ENCODE measurements at regions of chr19 and their contacts with region 1.

Region 1: DNA sequence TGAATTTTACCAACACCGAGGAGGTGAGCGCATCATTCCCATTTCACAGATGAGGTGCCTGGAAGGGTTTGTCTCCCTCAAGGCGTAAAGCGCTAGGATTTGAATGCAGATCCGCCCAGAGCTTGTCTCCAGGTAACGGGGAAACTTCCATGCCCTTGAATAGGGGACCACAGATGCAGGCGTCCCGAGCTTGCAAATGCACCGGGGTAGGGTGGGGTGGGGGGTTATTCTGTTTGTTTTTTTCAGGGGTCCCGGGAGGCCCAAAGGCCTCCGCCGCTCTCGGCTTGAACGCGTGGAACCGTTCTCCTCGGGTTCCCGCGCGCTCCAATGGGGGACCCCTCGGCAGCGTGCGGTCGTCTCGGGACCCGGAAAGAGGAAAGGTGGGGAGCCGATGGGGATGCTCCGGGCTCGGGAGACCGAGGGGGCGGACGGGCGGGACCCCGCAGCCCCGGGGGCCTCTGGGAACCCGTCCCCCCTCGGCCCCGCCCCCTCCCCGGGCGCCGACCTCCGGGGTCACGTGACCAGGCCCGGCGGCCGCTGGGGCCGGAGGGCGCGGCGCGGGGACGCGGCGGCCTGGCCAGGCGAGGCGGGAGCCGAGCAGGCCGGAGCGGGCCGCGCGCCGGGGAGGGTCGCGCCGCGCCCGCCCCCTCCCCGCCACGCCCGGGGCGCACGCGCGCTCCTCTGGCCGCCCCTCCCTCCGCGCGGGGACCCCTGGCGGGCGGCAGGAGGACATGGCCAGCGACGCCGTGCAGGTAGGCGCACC is at the start of gene PKN1:
- DNase-seq: peak; percentile 64
- ATAC-seq: peak; percentile 22
- H3K4me3 Mint-ChIP-seq: peak within 1 kb of the TSS; percentile 74
- H3K27ac Mint-ChIP-seq: peak within 1 kb of the TSS; percentile 77
- H3K4me1 Mint-ChIP-seq: peaks cover 26% of the 10 kb centered on the region
- H3K27me3 Mint-ChIP-seq: peaks cover 2% of the 10 kb centered on the region
- CTCF ChIP-seq: no peak
- total RNA-seq, gene PKN1: 172 to 192 TPM

Region 2: GRCh38 chr19:14395710-14396336 is 37.1 kb before region 1 on chr19:
- CTCF ChIA-PET with region 1: no interaction called
- POLR2A ChIA-PET with region 1: no interaction called
- intact Hi-C with region 1: no loop called
- DNase-seq: no peak
- ATAC-seq: peak; percentile 17
- H3K4me3 Mint-ChIP-seq: no peak overlapping the region
- H3K27ac Mint-ChIP-seq: peak overlapping the region; percentile 52
- H3K4me1 Mint-ChIP-seq: peaks cover 13% of the 10 kb centered on the region
- H3K27me3 Mint-ChIP-seq: no peaks in the 10 kb centered on the region
- CTCF ChIP-seq: no peak

Region 3: GRCh38 chr19:14419106-14419813 is 13.7 kb before region 1 on chr19 and contains the start of gene DDX39A:
- CTCF ChIA-PET with region 1: interaction called, 19 read pairs
- POLR2A ChIA-PET with region 1: interaction called, 13 read pairs
- intact Hi-C with region 1: no loop called
- DNase-seq: peak; percentile 99
- ATAC-seq: peak; percentile 93
- H3K4me3 Mint-ChIP-seq: peak within 1 kb of the TSS; percentile 93
- H3K27ac Mint-ChIP-seq: peak within 1 kb of the TSS; percentile 98
- H3K4me1 Mint-ChIP-seq: peaks cover 27% of the 10 kb centered on the region
- H3K27me3 Mint-ChIP-seq: no peaks in the 10 kb centered on the region
- CTCF ChIP-seq: no peak
- total RNA-seq, gene DDX39A: 217 to 226 TPM

Region 4: DNA sequence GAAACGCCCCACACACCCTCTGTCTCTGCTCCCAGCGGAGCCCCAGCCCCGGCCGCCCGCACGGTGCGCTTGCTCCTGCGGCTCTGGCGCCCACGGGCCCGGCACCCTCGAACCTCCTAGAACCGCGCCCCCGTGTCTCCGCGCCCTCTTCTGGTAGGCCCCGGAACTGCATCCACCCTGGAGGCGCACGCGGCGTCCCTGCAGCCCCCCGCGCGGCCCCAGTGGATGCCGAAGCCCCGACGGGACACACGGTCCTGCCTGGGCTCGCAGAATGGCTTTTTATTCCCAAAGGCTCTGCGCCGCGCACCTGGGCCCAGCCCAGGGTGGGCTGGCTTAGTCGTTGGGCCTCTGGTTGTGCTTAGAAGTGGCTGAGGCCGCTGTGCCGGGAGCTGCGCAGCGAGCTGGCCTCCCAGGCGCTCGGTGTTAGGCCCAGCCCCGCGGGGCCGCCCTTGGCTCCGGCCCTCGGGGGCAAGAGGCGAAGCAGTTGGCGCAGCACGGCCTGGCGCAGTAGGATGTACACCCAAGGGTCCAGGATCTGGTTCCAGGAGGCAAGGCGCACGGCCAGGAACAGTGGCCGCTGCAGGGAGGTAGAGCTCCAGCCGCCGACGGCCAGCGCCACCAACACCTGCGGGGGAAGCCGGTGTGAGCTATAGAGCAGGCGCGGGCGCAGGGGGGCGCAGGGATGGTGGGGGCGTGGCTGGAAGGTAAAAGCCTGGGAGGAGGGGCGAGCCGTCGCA is 39.4 kb after region 1 on chr19:
- CTCF ChIA-PET with region 1: interaction called, 11 read pairs
- POLR2A ChIA-PET with region 1: interaction called, 11 read pairs
- intact Hi-C with region 1: loop called (anchors 5 kb)
- DNase-seq: peak; percentile 91
- ATAC-seq: peak; percentile 63
- H3K4me3 Mint-ChIP-seq: no peak overlapping the region
- H3K27ac Mint-ChIP-seq: no peak overlapping the region
- H3K4me1 Mint-ChIP-seq: peaks cover 34% of the 10 kb centered on the region
- H3K27me3 Mint-ChIP-seq: peaks cover 15% of the 10 kb centered on the region
- CTCF ChIP-seq: peak; percentile 100

Region 5: GRCh38 chr19:14487370-14488125 is 54.6 kb after region 1 on chr19:
- CTCF ChIA-PET with region 1: interaction called, 41 read pairs
- POLR2A ChIA-PET with region 1: no interaction called
- intact Hi-C with region 1: no loop called
- DNase-seq: no peak
- ATAC-seq: no peak
- H3K4me3 Mint-ChIP-seq: no peak overlapping the region
- H3K27ac Mint-ChIP-seq: no peak overlapping the region
- H3K4me1 Mint-ChIP-seq: peaks cover 3% of the 10 kb centered on the region
- H3K27me3 Mint-ChIP-seq: no peaks in the 10 kb centered on the region
- CTCF ChIP-seq: no peak

Region 6: DNA sequence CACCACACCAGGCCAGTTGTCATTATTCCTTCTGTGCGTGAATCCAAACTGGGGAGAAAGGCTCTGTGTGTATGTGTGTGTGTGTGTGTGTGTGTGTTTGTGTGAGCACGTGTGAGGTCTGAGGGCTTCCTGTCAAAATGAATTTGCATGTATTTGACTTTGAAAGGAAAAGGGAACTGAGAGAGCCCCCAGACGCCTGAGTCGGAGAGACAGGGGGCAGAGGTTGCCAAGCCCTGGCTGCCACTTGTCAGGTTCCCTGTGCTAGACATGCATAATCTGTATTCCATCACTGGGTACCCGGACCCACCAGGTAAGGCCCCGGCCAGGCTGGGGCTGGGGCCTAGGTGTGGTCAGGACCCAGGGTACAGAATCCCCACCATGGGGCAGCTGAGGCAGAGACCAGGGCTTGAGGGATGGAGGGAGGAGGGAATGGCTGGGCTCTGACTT is 149.9 kb after region 1 on chr19 and contains the start of gene CLEC17A:
- CTCF ChIA-PET with region 1: no interaction called
- POLR2A ChIA-PET with region 1: no interaction called
- intact Hi-C with region 1: no loop called
- DNase-seq: no peak
- ATAC-seq: no peak
- H3K4me3 Mint-ChIP-seq: no peak within 1 kb of the TSS
- H3K27ac Mint-ChIP-seq: no peak within 1 kb of the TSS
- H3K4me1 Mint-ChIP-seq: peaks cover 18% of the 10 kb centered on the region
- H3K27me3 Mint-ChIP-seq: no peaks in the 10 kb centered on the region
- CTCF ChIP-seq: no peak
- total RNA-seq, gene CLEC17A: 0.60 to 0.83 TPM